ENCODE measurements at regions of chr6 and their contacts with region 1.

Region 1: DNA sequence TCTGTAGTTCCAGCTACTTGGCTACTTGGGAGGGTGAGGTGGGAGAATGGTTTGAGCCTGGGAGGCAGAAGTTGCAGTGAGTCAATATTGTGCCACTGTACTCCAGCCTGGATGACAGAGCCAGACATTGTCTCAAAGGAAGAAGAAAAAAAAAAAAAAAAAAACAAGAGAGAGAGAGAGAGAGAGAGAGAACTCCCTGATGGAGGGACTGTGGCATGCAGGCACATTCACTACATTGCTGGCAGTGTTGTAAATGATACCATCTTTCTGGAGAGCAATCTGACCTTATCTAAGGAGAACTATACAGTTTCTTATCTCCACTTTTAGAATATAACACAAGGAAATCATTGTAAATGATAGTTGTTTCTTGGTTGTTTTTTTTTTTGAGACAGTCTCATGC is 85.1 kb downstream of the MDN1 start:
- DNase-seq: no peak
- ATAC-seq: no peak
- H3K4me3 Mint-ChIP-seq: no peak overlapping the region
- H3K27ac Mint-ChIP-seq: no peak overlapping the region
- H3K4me1 Mint-ChIP-seq: no peaks in the 10 kb centered on the region
- H3K27me3 Mint-ChIP-seq: no peaks in the 10 kb centered on the region
- CTCF ChIP-seq: no peak

Region 2: GRCh38 chr6:89693207-89693606 is 41.3 kb before region 1 on chr6:
- CTCF ChIA-PET with region 1: no interaction called
- POLR2A ChIA-PET with region 1: interaction called, 12 read pairs
- intact Hi-C with region 1: no loop called
- DNase-seq: no peak
- ATAC-seq: no peak
- H3K4me3 Mint-ChIP-seq: no peak overlapping the region
- H3K27ac Mint-ChIP-seq: no peak overlapping the region
- H3K4me1 Mint-ChIP-seq: peaks cover 12% of the 10 kb centered on the region
- H3K27me3 Mint-ChIP-seq: no peaks in the 10 kb centered on the region
- CTCF ChIP-seq: no peak

Measured in activated B cell treated with CpG ODN at 0.5 μM for 24 hours (primary cell).